Activated T-helper 2 cell treated with anti-CD3 and anti-CD28 coated beads, Interferon-gamma antibody, Interleukin-2, Interleukin-4, amounts not matched to agents 10 μg/mL and 5 μg/mL and 100 μg/mL, durations not matched to agents 14 hours and 24 hours and 36 hours (primary cell): ENCODE measurements at regions of chr5 and their contacts with region 1.

Region 1: GRCh38 chr5:126656396-126657007 is 55.8 kb downstream of the PHAX start:
- DNase-seq: no peak
- H3K4me3 Mint-ChIP-seq: no peak overlapping the region
- H3K27ac Mint-ChIP-seq: no peak overlapping the region
- H3K4me1 Mint-ChIP-seq: peaks cover 6% of the 10 kb centered on the region
- H3K27me3 Mint-ChIP-seq: peaks cover 12% of the 10 kb centered on the region

Region 2: GRCh38 chr5:127313847-127314473 is 657.5 kb after region 1 on chr5:
- intact Hi-C with region 1: loop called (anchors 1 kb)
- DNase-seq: peak; percentile 48
- H3K4me3 Mint-ChIP-seq: no peak overlapping the region
- H3K27ac Mint-ChIP-seq: no peak overlapping the region
- H3K4me1 Mint-ChIP-seq: no peaks in the 10 kb centered on the region
- H3K27me3 Mint-ChIP-seq: peaks cover 30% of the 10 kb centered on the region

Region 3: GRCh38 chr5:127492854-127493738 is 836.6 kb after region 1 on chr5:
- intact Hi-C with region 1: loop called (anchors 2 kb)
- DNase-seq: no peak
- H3K4me3 Mint-ChIP-seq: no peak overlapping the region
- H3K27ac Mint-ChIP-seq: no peak overlapping the region
- H3K4me1 Mint-ChIP-seq: no peaks in the 10 kb centered on the region
- H3K27me3 Mint-ChIP-seq: peaks cover 31% of the 10 kb centered on the region